A673 (cell line): ENCODE measurements at regions of chr2 and their contacts with region 1.

Region 1: DNA sequence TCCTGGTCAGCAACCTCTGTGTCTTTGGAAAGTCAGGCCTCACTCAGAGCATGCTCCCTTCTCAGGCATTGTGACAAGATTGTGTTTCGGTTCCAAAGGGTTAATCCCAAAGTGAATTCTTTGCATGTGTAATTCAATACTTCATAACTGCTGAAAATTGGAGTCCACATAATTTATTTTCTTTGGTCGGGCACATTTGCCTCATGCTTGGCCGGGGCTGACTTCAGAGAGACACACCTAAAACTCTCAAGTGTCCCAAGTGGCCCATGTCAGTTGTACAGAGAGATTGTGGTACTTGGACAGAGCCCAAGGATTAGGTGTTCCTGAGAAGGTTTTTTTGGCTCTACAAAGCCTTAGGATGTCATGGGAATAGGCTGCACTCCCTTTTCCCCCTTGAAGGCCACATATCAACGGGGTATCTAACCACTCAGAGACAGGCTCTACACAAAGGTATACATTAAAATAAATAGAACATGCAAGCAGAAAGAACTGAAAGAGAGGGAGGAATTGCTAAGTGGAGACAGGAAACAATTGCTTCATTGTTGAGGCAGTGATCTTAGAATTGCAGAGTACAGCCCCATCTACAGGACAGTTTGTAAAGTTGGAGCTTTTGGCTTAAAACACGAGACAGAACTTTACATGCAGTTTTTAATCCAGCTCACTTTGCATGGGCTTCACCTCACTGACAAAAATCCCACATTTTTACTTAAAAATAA is 1232.3 kb upstream of the ZEB2 start:
- DNase-seq: peak; percentile 94
- H3K4me3 ChIP-seq: no peak overlapping the region
- H3K27ac ChIP-seq: peak overlapping the region; percentile 87
- H3K4me1 ChIP-seq: peaks cover 47% of the 10 kb centered on the region
- H3K27me3 ChIP-seq: no peaks in the 10 kb centered on the region
- CTCF ChIP-seq: peak; percentile 82

Region 2: DNA sequence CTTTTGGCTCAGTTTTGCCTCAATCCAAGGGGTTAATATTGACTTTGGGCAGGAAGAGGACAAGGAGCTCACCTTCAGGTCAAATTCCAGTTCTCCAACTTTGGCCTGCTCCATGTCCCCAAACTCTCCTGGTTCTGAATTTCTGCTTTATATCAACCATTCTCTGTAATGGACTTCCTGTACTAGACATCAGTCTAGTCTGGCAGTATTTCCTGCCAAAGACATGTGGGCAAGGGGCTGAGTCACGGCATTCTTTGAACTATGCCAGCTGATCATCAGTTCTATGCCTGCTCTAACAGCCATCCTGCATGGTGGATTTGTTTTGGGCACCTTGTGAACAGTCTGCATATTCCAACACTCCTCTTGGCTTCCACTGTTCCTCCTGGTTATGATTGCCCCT is 1431.8 kb before region 1 on chr2:
- CTCF ChIA-PET with region 1: no interaction called
- POLR2A ChIA-PET with region 1: no interaction called
- intact Hi-C with region 1: loop called (anchors 5 kb)
- DNase-seq: peak; percentile 60
- H3K4me3 ChIP-seq: no peak overlapping the region
- H3K27ac ChIP-seq: peak overlapping the region; percentile 40
- H3K4me1 ChIP-seq: peaks cover 58% of the 10 kb centered on the region
- H3K27me3 ChIP-seq: no peaks in the 10 kb centered on the region
- CTCF ChIP-seq: no peak

Region 3: GRCh38 chr2:145652571-145653545 is 99.4 kb before region 1 on chr2:
- CTCF ChIA-PET with region 1: no interaction called
- POLR2A ChIA-PET with region 1: no interaction called
- intact Hi-C with region 1: loop called (anchors 5 kb)
- DNase-seq: peak; percentile 90
- H3K4me3 ChIP-seq: no peak overlapping the region
- H3K27ac ChIP-seq: peak overlapping the region; percentile 83
- H3K4me1 ChIP-seq: peaks cover 59% of the 10 kb centered on the region
- H3K27me3 ChIP-seq: no peaks in the 10 kb centered on the region
- CTCF ChIP-seq: no peak

Region 4: DNA sequence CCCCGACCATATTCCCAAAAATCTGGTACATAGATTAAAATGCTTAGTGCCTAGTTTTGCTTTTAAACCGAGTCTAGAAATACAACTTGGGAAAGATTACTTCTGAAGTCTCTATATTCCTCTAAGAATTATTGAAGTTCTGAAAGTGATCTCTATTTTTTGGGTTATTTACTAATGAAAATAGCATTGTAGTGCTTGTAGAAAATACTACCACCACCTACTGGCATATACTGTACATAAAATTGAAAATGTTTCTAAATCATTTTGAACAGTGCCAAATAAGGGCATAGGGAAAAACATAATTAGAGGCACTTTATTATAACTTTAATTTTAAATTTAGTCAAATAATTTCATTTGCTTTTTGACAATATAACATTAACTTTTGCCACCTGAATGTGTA is 167.2 kb after region 1 on chr2:
- CTCF ChIA-PET with region 1: interaction called, 3 read pairs
- POLR2A ChIA-PET with region 1: no interaction called
- intact Hi-C with region 1: loop called (anchors 10 kb)
- DNase-seq: peak; percentile 31
- H3K4me3 ChIP-seq: no peak overlapping the region
- H3K27ac ChIP-seq: no peak overlapping the region
- H3K4me1 ChIP-seq: peaks cover 14% of the 10 kb centered on the region
- H3K27me3 ChIP-seq: no peaks in the 10 kb centered on the region
- CTCF ChIP-seq: peak; percentile 50; the same call in 1 of the 2 replicates

Region 5: GRCh38 chr2:146523196-146523595 is 770.9 kb after region 1 on chr2:
- CTCF ChIA-PET with region 1: no interaction called
- POLR2A ChIA-PET with region 1: no interaction called
- intact Hi-C with region 1: loop called (anchors 10 kb)
- DNase-seq: peak; percentile 67
- H3K4me3 ChIP-seq: no peak overlapping the region
- H3K27ac ChIP-seq: no peak overlapping the region
- H3K4me1 ChIP-seq: peaks cover 10% of the 10 kb centered on the region
- H3K27me3 ChIP-seq: no peaks in the 10 kb centered on the region
- CTCF ChIP-seq: peak; percentile 58